ENCODE measurements at regions of chr6 and their contacts with region 1.

Region 1: DNA sequence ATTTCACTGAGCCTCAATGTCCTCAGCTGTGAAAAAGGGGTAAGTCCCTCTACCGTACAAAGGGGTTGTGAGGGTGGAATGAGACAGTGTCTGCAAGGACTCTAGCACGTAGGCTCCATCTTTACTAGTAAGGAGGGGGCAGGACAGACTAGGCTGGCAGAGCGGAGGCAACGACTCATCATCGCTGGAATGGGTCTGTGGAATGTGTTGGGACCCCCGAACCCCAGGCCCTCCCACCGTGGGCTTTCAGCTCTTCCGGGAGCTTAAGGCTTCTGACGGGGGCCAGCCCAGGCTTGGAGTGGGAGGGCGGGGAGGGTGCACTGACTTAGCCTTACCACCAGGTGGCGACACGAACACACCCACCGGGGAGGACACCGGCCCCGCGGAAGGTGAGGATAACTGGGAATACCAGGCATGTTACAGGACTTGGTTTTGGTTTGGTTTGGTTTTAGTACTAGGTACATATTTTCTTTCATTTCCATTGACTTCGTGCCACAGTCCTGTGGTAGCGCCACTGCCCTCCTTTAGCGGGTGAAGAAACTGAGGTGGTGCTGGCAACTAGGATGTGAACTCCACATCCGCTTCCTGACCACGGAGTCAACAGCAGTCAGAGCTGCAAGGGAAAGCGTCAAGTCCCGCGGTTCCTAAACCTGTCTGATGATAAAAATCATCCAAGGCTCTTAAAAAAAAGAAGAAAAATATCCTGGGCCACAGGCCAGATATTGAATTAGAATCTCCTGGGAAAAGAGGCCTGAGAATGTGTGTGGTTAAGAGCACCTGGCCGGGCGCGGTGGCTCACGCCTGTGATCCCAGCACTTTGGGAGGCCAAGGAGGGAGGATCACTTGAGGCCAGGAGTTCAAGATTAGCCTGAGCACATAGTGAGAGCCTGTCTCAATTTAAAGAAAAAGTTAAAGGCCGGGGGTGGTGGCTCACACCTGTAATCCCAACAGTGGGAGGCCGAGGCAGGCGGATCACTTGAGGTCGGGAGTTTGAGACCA is 10.3 kb upstream of the TULP1 start:
- H3K4me3 ChIP-seq: no peak overlapping the region
- H3K27ac ChIP-seq: no peak overlapping the region
- H3K4me1 ChIP-seq: no peaks in the 10 kb centered on the region
- CTCF ChIP-seq: peak; percentile 84

Region 2: GRCh38 chr6:35534407-35535170 is 11.6 kb after region 1 on chr6:
- CTCF ChIA-PET with region 1: interaction called, 36 read pairs
- POLR2A ChIA-PET with region 1: no interaction called
- H3K4me3 ChIP-seq: no peak overlapping the region
- H3K27ac ChIP-seq: no peak overlapping the region
- H3K4me1 ChIP-seq: no peaks in the 10 kb centered on the region
- CTCF ChIP-seq: no peak

Region 3: DNA sequence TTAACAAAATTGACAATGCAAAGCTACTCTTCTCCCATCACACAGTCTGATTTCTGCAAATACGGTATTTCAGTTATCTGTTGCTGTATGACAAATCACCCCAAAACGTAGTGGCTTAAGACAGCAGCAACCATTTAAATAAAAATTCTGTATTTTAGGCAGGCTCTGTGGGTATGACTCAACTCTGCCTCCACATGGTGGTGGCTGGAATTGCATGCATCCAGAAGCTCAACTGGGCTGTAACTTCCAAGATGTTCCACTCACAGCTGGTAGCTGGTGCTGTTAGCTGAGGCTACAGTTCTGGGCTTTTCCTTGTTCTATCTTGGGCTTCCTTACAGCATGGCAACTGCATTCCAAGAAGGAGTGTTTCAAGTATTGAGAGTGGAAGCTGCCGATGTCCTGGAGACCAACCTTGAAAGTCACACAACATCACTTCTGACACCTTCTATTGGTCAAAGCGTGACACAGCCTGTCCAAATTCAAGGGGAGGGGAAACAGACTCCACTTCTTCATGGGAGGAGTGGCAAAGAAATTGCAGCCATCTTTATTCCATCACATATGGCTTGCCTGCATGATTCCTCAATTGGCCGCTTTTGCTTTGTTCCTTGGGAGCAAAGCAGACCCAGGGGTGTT is 29.4 kb after region 1 on chr6:
- CTCF ChIA-PET with region 1: interaction called, 11 read pairs
- POLR2A ChIA-PET with region 1: interaction called, 5 read pairs
- H3K4me3 ChIP-seq: no peak overlapping the region
- H3K27ac ChIP-seq: no peak overlapping the region
- H3K4me1 ChIP-seq: no peaks in the 10 kb centered on the region
- CTCF ChIP-seq: peak; percentile 45

Region 4: DNA sequence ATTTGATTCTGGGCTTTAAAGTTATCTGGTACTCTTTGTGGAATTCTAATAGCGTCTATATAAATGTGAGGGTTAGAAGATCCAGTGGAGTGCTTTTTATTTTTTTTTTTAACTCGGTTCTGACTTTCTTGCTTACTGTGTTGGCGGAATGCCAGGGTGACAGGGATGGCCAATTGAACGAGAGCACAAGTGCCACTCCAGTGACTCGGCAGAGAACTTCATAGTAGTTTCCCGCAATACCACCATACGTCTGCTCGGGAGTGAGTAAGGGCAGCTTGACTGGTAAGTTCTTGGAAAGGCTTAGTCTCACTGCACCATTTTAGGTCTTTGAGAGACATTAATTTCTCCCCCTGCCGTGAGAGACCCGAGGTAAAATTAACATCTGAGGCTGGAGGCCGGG is 39.1 kb after region 1 on chr6:
- CTCF ChIA-PET with region 1: interaction called, 10 read pairs
- POLR2A ChIA-PET with region 1: no interaction called
- H3K4me3 ChIP-seq: no peak overlapping the region
- H3K27ac ChIP-seq: no peak overlapping the region
- H3K4me1 ChIP-seq: peaks cover 10% of the 10 kb centered on the region; the same call in 1 of the 2 replicates
- CTCF ChIP-seq: no peak

Region 5: DNA sequence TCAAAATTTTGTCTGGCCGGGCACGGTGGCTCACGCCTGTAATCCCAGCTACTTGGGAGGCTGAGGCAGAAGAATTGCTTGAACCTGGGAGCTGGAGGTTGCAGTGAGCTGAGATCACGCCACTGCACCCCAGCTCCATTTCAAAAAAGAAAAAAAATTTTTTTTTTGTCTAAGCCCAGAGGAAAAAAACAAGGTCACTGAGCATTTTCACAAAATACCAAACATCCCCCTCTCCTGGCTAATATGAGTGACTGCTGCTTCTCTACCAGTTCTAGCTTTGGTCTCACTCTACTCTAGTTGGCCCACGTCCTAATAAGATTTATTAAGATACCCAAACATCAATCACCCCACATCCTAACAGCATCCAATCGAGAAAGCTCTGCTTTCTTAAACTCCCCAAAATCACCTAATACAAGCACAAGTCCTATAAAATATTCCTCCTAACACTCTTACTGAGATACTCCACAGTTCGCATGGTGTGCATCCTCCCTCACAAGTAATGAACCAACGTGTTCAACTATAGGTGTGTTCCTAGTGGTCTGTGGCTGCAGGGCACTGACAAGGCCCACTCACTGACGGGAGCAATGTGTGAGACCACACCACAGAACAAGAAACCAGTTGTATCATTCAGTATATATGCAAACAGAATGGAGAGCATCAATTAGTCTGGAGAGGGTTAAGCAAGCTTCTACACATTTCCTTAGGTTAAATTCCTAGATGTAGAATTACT is 101.5 kb after region 1 on chr6:
- CTCF ChIA-PET with region 1: interaction called, 12 read pairs
- POLR2A ChIA-PET with region 1: no interaction called
- H3K4me3 ChIP-seq: no peak overlapping the region
- H3K27ac ChIP-seq: no peak overlapping the region
- H3K4me1 ChIP-seq: no peaks in the 10 kb centered on the region; the same call in 1 of the 2 replicates
- CTCF ChIP-seq: no peak

Region 6: DNA sequence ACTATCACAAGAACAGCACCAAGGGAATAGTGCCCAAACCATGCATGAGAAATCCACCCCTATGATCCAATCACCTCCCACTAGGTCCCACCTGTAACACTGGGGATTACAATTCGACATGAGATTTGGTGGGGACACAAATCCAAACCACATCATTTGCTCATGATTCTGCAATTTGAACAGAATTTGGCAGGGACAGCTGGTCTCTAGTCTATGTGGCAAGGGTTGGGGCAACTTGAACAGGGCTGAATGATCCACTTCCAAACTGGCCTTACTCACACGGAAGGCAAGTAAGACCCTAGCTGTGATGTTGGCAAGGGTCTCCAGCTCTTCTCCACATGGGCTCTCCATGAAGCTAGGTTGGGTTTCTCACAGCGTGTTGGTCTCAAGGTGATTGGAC is 175.9 kb after region 1 on chr6:
- CTCF ChIA-PET with region 1: no interaction called
- POLR2A ChIA-PET with region 1: no interaction called
- H3K4me3 ChIP-seq: no peak overlapping the region
- H3K27ac ChIP-seq: no peak overlapping the region
- H3K4me1 ChIP-seq: no peaks in the 10 kb centered on the region
- CTCF ChIP-seq: no peak

Measured in HEK293 (cell line).